ENCODE measurements at regions of chr1 and their contacts with region 1.

Region 1: DNA sequence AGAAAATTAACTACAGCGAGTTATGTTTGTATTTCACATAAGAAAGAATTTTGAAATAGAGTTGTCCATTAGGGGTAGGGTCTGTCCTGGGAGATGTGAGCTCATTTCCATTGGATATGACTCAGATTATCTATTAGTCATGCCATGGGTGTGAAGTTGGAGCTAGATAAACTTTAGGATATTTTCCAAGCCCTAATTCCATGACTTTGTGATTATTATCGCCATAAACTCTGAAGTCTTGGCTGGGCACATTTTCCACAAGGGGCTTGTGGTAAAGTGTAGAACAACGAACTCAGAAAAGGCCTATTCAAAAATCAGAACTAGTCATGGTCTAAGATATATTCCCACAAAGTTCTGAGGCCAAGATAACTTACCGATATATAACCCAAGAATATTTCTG is 396.6 kb downstream of the DPYD start:
- DNase-seq: no peak
- ATAC-seq: no peak
- H3K4me3 ChIP-seq: no peak overlapping the region
- H3K27ac ChIP-seq: no peak overlapping the region
- H3K4me1 ChIP-seq: no peaks in the 10 kb centered on the region
- H3K27me3 ChIP-seq: no peaks in the 10 kb centered on the region
- CTCF ChIP-seq: no peak

Region 2: GRCh38 chr1:97137862-97138514 is 386.2 kb before region 1 on chr1:
- intact Hi-C with region 1: loop called in 1 of 2 experiments (anchors 10 kb)
- DNase-seq: no peak
- ATAC-seq: peak; percentile 84 to 99 (median 94)
- H3K4me3 ChIP-seq: peak overlapping the region; percentile 60
- H3K27ac ChIP-seq: peak overlapping the region; percentile 54
- H3K4me1 ChIP-seq: peaks cover 7% of the 10 kb centered on the region
- H3K27me3 ChIP-seq: no peaks in the 10 kb centered on the region
- CTCF ChIP-seq: peak; percentile 67

Measured in psoas muscle (tissue), 8 donors.